CD8-positive, alpha-beta T cell (primary cell): ENCODE measurements at regions of chr1 and their contacts with region 1.

Region 1: GRCh38 chr1:66350001-66350547 is 183.9 kb upstream of the SGIP1 start:
- DNase-seq: peak in 7 of 9 experiments; percentile 30 to 90 (median 68)
- ATAC-seq: peak; percentile 80
- H3K4me3 ChIP-seq: peak overlapping the region in 1 of 2 experiments; percentile 16
- H3K4me3 Mint-ChIP-seq: peak overlapping the region; percentile 72
- H3K27ac ChIP-seq: peak overlapping the region; percentile 33 to 68
- H3K27ac Mint-ChIP-seq: peak overlapping the region; percentile 95
- H3K4me1 ChIP-seq: peaks cover 81% of the 10 kb centered on the region
- H3K4me1 Mint-ChIP-seq: peaks cover 96% of the 10 kb centered on the region
- H3K27me3 ChIP-seq: no peaks in the 10 kb centered on the region
- H3K27me3 Mint-ChIP-seq: no peaks in the 10 kb centered on the region
- CTCF ChIP-seq: no peak

Region 2: DNA sequence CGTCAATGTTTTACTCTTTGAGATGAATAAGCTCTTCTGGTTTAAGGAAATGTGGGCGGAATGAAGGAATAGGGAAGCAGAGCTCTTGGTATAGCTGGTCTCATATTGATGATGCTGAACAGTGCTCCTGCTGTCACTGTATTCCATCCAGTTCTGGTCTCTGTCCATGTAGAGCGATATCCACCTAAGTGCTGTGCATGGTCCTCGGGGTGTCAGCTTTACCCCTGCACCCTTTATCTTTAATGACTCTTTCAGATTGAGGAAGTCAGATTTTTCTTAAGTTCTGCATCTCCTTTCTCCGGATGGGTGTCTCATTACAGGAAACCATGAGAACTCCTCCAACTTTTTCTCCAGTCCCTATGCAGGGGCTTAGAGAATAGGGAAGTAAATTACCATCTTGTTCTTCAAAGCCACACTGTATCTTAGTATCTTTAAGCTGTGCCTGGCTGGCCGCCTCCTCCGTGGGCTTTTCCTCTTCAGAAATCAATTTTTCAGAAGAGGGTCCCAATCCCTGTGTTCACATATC is 504.5 kb before region 1 on chr1:
- CTCF ChIA-PET with region 1: no interaction called
- POLR2A ChIA-PET with region 1: no interaction called
- intact Hi-C with region 1: no loop called
- DNase-seq: no peak
- ATAC-seq: no peak
- H3K4me3 ChIP-seq: no peak overlapping the region
- H3K4me3 Mint-ChIP-seq: no peak overlapping the region
- H3K27ac ChIP-seq: no peak overlapping the region
- H3K27ac Mint-ChIP-seq: no peak overlapping the region
- H3K4me1 ChIP-seq: no peaks in the 10 kb centered on the region
- H3K4me1 Mint-ChIP-seq: no peaks in the 10 kb centered on the region
- H3K27me3 ChIP-seq: no peaks in the 10 kb centered on the region
- H3K27me3 Mint-ChIP-seq: peaks cover 4% of the 10 kb centered on the region
- CTCF ChIP-seq: no peak

Region 3: GRCh38 chr1:66253330-66253921 is 96.6 kb before region 1 on chr1:
- CTCF ChIA-PET with region 1: interaction called, 5 read pairs
- POLR2A ChIA-PET with region 1: no interaction called
- intact Hi-C with region 1: loop called in 1 of 2 experiments (anchors 5 kb)
- DNase-seq: peak in 3 of 9 experiments; percentile 19 to 74 (median 61)
- ATAC-seq: peak; percentile 86
- H3K4me3 ChIP-seq: no peak overlapping the region
- H3K4me3 Mint-ChIP-seq: no peak overlapping the region
- H3K27ac ChIP-seq: no peak overlapping the region
- H3K27ac Mint-ChIP-seq: no peak overlapping the region
- H3K4me1 ChIP-seq: peaks cover 5% of the 10 kb centered on the region
- H3K4me1 Mint-ChIP-seq: peaks cover 13% of the 10 kb centered on the region
- H3K27me3 ChIP-seq: no peaks in the 10 kb centered on the region
- H3K27me3 Mint-ChIP-seq: no peaks in the 10 kb centered on the region
- CTCF ChIP-seq: peak; percentile 84

Region 4: GRCh38 chr1:66282343-66282852 is 67.7 kb before region 1 on chr1:
- CTCF ChIA-PET with region 1: interaction called, 5 read pairs
- POLR2A ChIA-PET with region 1: interaction called, 6 read pairs
- intact Hi-C with region 1: loop called in 1 of 2 experiments (anchors 5 kb)
- DNase-seq: peak in 7 of 9 experiments; percentile 16 to 89 (median 54)
- ATAC-seq: peak; percentile 93
- H3K4me3 ChIP-seq: no peak overlapping the region
- H3K4me3 Mint-ChIP-seq: no peak overlapping the region
- H3K27ac ChIP-seq: peak overlapping the region in 1 of 2 experiments; percentile 13
- H3K27ac Mint-ChIP-seq: peak overlapping the region; percentile 84
- H3K4me1 ChIP-seq: peaks cover 55% of the 10 kb centered on the region
- H3K4me1 Mint-ChIP-seq: peaks cover 89% of the 10 kb centered on the region
- H3K27me3 ChIP-seq: no peaks in the 10 kb centered on the region
- H3K27me3 Mint-ChIP-seq: no peaks in the 10 kb centered on the region
- CTCF ChIP-seq: peak; percentile 35

Region 5: DNA sequence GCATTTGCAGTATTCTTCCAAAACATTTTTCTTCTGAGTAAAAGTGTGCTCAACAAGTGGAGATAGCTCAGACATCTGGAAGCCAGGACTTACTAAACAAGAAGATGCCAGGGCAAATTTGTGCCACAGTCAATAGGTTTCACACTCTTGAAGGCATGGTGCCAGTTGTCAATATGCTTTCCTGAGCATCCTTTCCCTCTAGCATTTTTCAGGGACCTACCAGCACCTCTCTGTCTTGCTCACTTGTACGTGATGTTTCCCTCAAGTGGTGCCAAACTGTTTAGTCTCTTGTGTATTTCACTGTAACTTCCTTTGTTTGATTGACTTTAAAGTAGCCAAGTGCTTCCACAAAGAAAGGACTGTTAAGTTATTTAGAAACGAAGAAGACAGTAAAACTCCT is 10.1 kb before region 1 on chr1:
- CTCF ChIA-PET with region 1: interaction called, 28 read pairs
- POLR2A ChIA-PET with region 1: interaction called, 20 read pairs
- intact Hi-C with region 1: loop called (anchors 1 to 2 kb)
- DNase-seq: peak in 2 of 9 experiments; percentile 24 to 48
- ATAC-seq: no peak
- H3K4me3 ChIP-seq: no peak overlapping the region
- H3K4me3 Mint-ChIP-seq: peak overlapping the region; percentile 54
- H3K27ac ChIP-seq: no peak overlapping the region
- H3K27ac Mint-ChIP-seq: peak overlapping the region; percentile 22
- H3K4me1 ChIP-seq: peaks cover 67% of the 10 kb centered on the region
- H3K4me1 Mint-ChIP-seq: peaks cover 80% of the 10 kb centered on the region
- H3K27me3 ChIP-seq: no peaks in the 10 kb centered on the region
- H3K27me3 Mint-ChIP-seq: no peaks in the 10 kb centered on the region
- CTCF ChIP-seq: no peak

Region 6: GRCh38 chr1:66360285-66360724 is 10.2 kb after region 1 on chr1:
- CTCF ChIA-PET with region 1: interaction called, 14 read pairs
- POLR2A ChIA-PET with region 1: interaction called, 11 read pairs
- intact Hi-C with region 1: loop called in 1 of 2 experiments (anchors 1 kb)
- DNase-seq: no peak
- ATAC-seq: no peak
- H3K4me3 ChIP-seq: no peak overlapping the region
- H3K4me3 Mint-ChIP-seq: no peak overlapping the region
- H3K27ac ChIP-seq: no peak overlapping the region
- H3K27ac Mint-ChIP-seq: no peak overlapping the region
- H3K4me1 ChIP-seq: peaks cover 37% of the 10 kb centered on the region
- H3K4me1 Mint-ChIP-seq: peaks cover 63% of the 10 kb centered on the region
- H3K27me3 ChIP-seq: no peaks in the 10 kb centered on the region
- H3K27me3 Mint-ChIP-seq: no peaks in the 10 kb centered on the region
- CTCF ChIP-seq: peak; percentile 21

Region 7: DNA sequence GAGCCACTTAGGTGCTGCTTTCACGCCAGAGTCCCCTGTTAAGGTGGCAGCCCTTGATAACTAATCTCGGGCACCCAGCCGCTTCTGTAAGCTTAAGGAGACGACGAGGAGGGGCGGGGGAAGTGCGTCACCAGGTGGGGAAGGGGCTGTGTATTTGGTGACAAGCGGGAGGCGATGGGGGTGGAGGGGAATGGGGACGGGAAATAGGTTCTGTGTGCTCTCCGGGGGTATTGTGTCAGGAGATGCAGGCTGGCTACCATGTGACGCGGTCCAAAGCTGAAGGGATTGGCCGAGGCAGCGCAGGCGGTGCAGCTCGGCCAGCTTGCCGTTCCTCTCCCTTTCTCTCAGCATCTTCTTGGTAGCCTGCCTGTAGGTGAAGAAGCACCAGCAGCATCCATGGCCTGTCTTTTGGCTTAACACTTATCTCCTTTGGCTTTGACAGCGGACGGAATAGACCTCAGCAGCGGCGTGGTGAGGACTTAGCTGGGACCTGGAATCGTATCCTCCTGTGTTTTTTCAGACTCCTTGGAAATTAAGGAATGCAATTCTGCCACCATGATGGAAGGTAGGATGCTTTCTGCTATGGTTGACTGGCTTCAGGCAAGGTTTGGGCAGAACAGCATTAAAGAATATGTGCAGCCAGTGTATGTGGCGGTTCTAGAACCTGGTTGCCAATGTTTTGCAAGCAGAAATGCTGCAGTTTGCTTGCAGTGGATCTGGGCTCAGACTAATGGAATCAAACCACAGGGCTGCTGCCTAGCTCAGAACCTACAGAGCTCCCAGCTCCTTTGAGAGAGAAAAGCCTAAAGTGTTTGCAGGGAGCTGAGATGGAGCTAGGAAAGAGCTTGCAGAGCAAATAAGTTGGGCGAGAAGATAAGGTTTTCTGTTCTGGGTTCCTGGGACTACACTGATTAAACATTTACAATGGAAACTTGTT is 184.0 kb after region 1 on chr1 and contains the start of gene SGIP1:
- CTCF ChIA-PET with region 1: no interaction called
- POLR2A ChIA-PET with region 1: no interaction called
- intact Hi-C with region 1: no loop called
- DNase-seq: peak in 4 of 9 experiments; percentile 7 to 39 (median 22)
- ATAC-seq: peak; percentile 42
- H3K4me3 ChIP-seq: peak within 1 kb of the TSS; percentile 4 to 43
- H3K4me3 Mint-ChIP-seq: peak within 1 kb of the TSS; percentile 77
- H3K27ac ChIP-seq: no peak within 1 kb of the TSS
- H3K27ac Mint-ChIP-seq: no peak within 1 kb of the TSS
- H3K4me1 ChIP-seq: peaks cover 7% of the 10 kb centered on the region
- H3K4me1 Mint-ChIP-seq: peaks cover 14% of the 10 kb centered on the region
- H3K27me3 ChIP-seq: peaks cover 2 to 3% of the 10 kb centered on the region in 2 experiments
- H3K27me3 Mint-ChIP-seq: peaks cover 37% of the 10 kb centered on the region
- CTCF ChIP-seq: no peak
- total RNA-seq, gene SGIP1: not detected